MCF 10A (cell line): ENCODE measurements at regions of chr15 and their contacts with region 1.

Region 1: DNA sequence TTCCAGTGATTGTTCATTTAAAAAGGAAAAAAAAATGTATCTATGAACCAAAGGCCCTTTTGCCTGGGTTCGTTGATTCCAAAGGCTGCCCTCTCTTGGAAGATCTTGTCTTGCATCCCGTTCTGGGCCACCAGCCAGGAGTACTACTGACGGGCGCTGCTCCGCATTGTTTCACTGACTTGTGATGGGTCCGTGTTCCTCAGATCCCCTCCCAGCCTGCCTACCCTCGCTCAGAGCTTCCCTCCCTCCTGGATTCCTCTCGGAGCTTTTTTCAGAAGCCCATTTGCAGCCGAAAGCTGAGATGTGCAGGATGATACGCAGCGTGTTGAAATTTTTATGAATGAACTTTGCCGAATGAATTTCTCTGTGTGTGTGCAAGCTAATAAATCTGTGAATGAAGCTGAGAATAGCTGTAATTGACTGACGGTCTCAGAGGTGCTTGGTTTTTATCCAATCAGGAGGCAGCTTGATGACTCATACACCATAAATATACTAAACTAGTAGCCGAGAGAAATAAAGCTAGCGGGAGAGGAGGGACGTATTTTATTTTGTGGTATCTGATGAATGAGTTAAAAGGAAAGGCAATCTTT is at the start of gene SHC4:
- DNase-seq: peak; percentile 81
- H3K4me3 Mint-ChIP-seq: peak within 1 kb of the TSS; percentile 76
- H3K27ac Mint-ChIP-seq: no peak within 1 kb of the TSS
- H3K4me1 Mint-ChIP-seq: peaks cover 5% of the 10 kb centered on the region
- H3K27me3 Mint-ChIP-seq: no peaks in the 10 kb centered on the region
- CTCF ChIP-seq: peak; percentile 31
- total RNA-seq, gene SHC4: 0.26 and 0.49 TPM in 2 replicates

Region 2: GRCh38 chr15:48645558-48646330 is 317.9 kb before region 1 on chr15 and contains the start of gene FBN1:
- CTCF ChIA-PET with region 1: no interaction called
- POLR2A ChIA-PET with region 1: no interaction called
- intact Hi-C with region 1: loop called (anchors 10 kb)
- DNase-seq: peak; percentile 59
- H3K4me3 Mint-ChIP-seq: peak within 1 kb of the TSS; percentile 79
- H3K27ac Mint-ChIP-seq: no peak within 1 kb of the TSS
- H3K4me1 Mint-ChIP-seq: peaks cover 20% of the 10 kb centered on the region
- H3K27me3 Mint-ChIP-seq: no peaks in the 10 kb centered on the region
- CTCF ChIP-seq: no peak
- total RNA-seq, gene FBN1: 14.3 and 24.2 TPM in 2 replicates

Region 3: DNA sequence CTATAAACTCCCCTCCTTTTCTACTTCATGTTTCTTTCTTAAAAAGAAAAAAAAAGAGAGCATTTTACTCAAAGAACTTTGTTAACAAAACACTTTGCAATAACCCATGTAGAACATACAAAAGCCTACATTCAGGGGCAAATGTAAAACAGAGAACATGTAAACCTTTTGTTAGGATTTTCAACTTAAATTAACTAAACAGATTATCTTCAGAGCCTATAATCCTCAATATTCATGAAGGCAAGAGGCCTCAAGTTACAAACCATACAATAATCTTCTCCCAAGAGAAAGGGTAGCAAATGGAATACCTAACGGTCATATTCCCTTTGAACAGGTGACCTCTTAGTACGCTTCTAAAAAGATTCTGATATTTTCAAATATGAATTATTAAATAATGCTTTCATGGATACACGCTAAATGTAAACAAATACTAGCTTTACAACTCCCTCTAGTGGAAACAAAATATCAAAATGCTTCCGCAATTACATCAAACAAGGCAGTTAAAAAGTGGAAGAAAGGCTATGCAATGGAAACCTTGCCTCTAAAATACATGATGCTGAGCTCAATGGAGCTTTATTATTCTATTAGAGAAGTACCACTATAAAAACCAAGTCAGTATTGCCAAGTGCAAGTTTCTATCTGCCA is 162.7 kb before region 1 on chr15:
- CTCF ChIA-PET with region 1: no interaction called
- POLR2A ChIA-PET with region 1: no interaction called
- intact Hi-C with region 1: no loop called
- DNase-seq: peak; percentile 26
- H3K4me3 Mint-ChIP-seq: no peak overlapping the region
- H3K27ac Mint-ChIP-seq: peak overlapping the region; percentile 42
- H3K4me1 Mint-ChIP-seq: peaks cover 14% of the 10 kb centered on the region
- H3K27me3 Mint-ChIP-seq: no peaks in the 10 kb centered on the region
- CTCF ChIP-seq: peak; percentile 42

Region 4: GRCh38 chr15:48868536-48868935 is 95.1 kb before region 1 on chr15:
- CTCF ChIA-PET with region 1: interaction called, 127 read pairs
- POLR2A ChIA-PET with region 1: interaction called, 6 read pairs
- intact Hi-C with region 1: no loop called
- DNase-seq: peak; percentile 78
- H3K4me3 Mint-ChIP-seq: no peak overlapping the region
- H3K27ac Mint-ChIP-seq: peak overlapping the region; percentile 82
- H3K4me1 Mint-ChIP-seq: peaks cover 39% of the 10 kb centered on the region
- H3K27me3 Mint-ChIP-seq: no peaks in the 10 kb centered on the region
- CTCF ChIP-seq: no peak

Region 5: GRCh38 chr15:49145651-49146609 is 182.3 kb after region 1 on chr15:
- CTCF ChIA-PET with region 1: interaction called, 3 read pairs
- POLR2A ChIA-PET with region 1: no interaction called
- intact Hi-C with region 1: loop called (anchors 5 kb)
- DNase-seq: peak; percentile 58
- H3K4me3 Mint-ChIP-seq: no peak overlapping the region
- H3K27ac Mint-ChIP-seq: no peak overlapping the region
- H3K4me1 Mint-ChIP-seq: peaks cover 33% of the 10 kb centered on the region
- H3K27me3 Mint-ChIP-seq: no peaks in the 10 kb centered on the region
- CTCF ChIP-seq: peak; percentile 64